ENCODE measurements at regions of chr11 and their contacts with region 1.

Region 1: GRCh38 chr11:65487413-65488272 is 11.2 kb upstream of the MALAT1 start:
- DNase-seq: peak; percentile 97
- H3K4me3 Mint-ChIP-seq: peak overlapping the region; percentile 44
- H3K27ac Mint-ChIP-seq: peak overlapping the region; percentile 94
- H3K4me1 Mint-ChIP-seq: peaks cover 68% of the 10 kb centered on the region
- H3K27me3 Mint-ChIP-seq: no peaks in the 10 kb centered on the region
- CTCF ChIP-seq: no peak

Region 2: DNA sequence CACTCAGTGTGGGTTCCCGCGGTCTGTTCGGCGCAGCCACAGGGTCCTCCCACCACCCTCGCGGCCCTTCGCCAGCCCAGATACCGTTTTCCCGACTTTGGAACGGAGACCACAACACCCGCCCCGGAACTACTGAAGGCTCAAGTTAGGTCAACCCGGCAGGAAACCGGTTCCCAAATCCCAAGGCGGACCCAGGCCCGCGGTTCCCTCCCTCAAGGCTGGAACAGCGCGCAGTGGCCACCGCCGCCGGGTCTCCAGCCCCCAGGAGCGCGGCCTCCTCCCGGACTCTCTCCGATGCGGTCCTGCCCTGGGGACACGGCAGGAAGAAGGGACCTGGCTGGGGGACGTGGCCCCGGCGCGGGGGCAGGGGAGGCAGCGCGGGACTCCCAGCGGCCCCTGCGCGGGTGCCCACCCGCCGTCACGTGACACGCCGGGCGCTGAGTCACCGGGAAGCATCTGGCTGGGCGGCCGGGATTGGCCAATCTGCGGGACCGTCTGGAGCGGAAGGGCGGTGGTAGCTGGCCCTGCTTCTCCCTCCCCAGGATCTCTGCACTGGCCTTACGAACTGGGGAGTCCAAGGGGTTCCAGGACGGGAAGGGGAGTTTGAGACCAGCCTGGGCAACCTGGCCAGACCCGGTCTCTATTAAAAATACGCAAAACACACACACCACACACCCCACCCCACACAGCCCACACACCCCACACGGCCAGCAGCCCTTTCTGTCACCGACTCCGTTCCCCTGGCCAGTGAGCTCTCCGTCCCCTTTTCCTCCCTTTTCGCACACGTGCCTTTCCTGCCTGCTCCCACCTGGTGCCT is 10.3 kb before region 1 on chr11:
- CTCF ChIA-PET with region 1: interaction called, 23 read pairs
- intact Hi-C with region 1: no loop called
- DNase-seq: peak; percentile 98
- H3K4me3 Mint-ChIP-seq: peak overlapping the region; percentile 89
- H3K27ac Mint-ChIP-seq: peak overlapping the region; percentile 98
- H3K4me1 Mint-ChIP-seq: peaks cover 48% of the 10 kb centered on the region
- H3K27me3 Mint-ChIP-seq: no peaks in the 10 kb centered on the region
- CTCF ChIP-seq: no peak

Region 3: GRCh38 chr11:65546217-65546958 is 58.7 kb after region 1 on chr11:
- CTCF ChIA-PET with region 1: no interaction called
- intact Hi-C with region 1: no loop called
- DNase-seq: peak; percentile 99
- H3K4me3 Mint-ChIP-seq: peak overlapping the region; percentile 54
- H3K27ac Mint-ChIP-seq: peak overlapping the region; percentile 8
- H3K4me1 Mint-ChIP-seq: peaks cover 36% of the 10 kb centered on the region
- H3K27me3 Mint-ChIP-seq: no peaks in the 10 kb centered on the region
- CTCF ChIP-seq: no peak